ENCODE measurements at regions of chr1 and their contacts with region 1.

Region 1: GRCh38 chr1:113835642-113836307 is 23.5 kb upstream of the RSBN1 start:
- DNase-seq: peak in 4 of 5 donors; percentile 52 to 64 (median 59)
- H3K4me3 ChIP-seq: no peak overlapping the region
- H3K4me3 Mint-ChIP-seq: peak overlapping the region in 2 of 8 donors; percentile 19 to 36
- H3K27ac ChIP-seq: no peak overlapping the region
- H3K27ac Mint-ChIP-seq: peak overlapping the region in 3 of 7 donors; percentile 9 to 80 (median 65)
- H3K4me1 ChIP-seq: peaks cover 6% of the 10 kb centered on the region
- H3K4me1 Mint-ChIP-seq: peaks cover 2 to 5% (median 5%) of the 10 kb centered on the region in 4 donors
- H3K27me3 ChIP-seq: no peaks in the 10 kb centered on the region
- H3K27me3 Mint-ChIP-seq: no peaks in the 10 kb centered on the region

Region 2: GRCh38 chr1:113871597-113872113 is 35.9 kb after region 1 on chr1 and contains the start of gene PTPN22:
- CTCF ChIA-PET with region 1: interaction called, 5 read pairs
- POLR2A ChIA-PET with region 1: interaction called, 3 read pairs
- intact Hi-C with region 1: loop called (anchors 1 kb)
- DNase-seq: peak; percentile 85 to 95 (median 90)
- H3K4me3 ChIP-seq: peak within 1 kb of the TSS; percentile 48 to 71
- H3K4me3 Mint-ChIP-seq: peak within 1 kb of the TSS; percentile 85 to 95 (median 90)
- H3K27ac ChIP-seq: peak within 1 kb of the TSS; percentile 79
- H3K27ac Mint-ChIP-seq: peak within 1 kb of the TSS; percentile 96 to 99 (median 98)
- H3K4me1 ChIP-seq: peaks cover 74% of the 10 kb centered on the region
- H3K4me1 Mint-ChIP-seq: peaks cover 56 to 83% (median 66%) of the 10 kb centered on the region in 4 donors
- H3K27me3 ChIP-seq: no peaks in the 10 kb centered on the region
- H3K27me3 Mint-ChIP-seq: no peaks in the 10 kb centered on the region
- total RNA-seq, gene PTPN22: 32.2 to 33.7 TPM

Region 3: DNA sequence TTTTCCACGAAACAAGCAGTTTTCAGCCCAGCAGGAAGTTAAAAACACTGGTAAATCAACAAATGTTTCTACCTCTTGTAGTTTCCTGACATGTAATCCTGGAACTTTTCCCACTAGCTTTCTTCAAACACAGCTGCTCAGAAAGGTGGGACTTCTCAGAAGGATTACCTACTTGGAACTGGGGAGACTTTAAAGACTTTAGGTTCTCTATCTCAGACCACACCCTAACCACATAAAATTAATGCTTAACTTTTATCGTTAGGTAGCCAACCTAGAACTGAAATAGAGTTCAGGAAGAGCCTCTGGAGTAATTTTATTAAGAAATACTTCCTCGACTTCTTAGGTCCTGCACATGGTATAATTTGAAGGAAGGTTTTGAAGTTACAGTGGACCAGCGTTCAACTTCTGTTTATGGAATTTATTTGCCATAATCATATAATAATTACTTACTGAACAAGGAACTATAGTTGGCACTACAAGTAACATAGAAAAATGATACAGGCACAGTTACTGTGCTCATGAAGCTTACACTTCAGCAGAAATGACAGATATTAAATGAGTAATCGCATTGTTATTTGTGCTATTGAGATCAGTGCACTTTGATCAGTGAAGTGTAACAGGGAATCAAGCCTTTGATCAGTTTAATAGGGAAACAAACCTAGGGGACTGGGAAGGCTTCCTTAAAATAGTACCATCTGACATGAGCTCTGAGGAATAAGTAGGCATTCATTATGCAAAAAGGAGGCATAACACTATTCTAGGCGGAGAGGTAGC is 51.8 kb after region 1 on chr1 and contains the start of gene BCL2L15:
- CTCF ChIA-PET with region 1: interaction called, 10 read pairs
- POLR2A ChIA-PET with region 1: no interaction called
- intact Hi-C with region 1: no loop called
- DNase-seq: no peak
- H3K4me3 ChIP-seq: no peak within 1 kb of the TSS
- H3K4me3 Mint-ChIP-seq: peak within 1 kb of the TSS; percentile 2 to 65 (median 38)
- H3K27ac ChIP-seq: no peak within 1 kb of the TSS
- H3K27ac Mint-ChIP-seq: peak within 1 kb of the TSS in 5 of 7 donors; percentile 10 to 69 (median 43)
- H3K4me1 ChIP-seq: peaks cover 22% of the 10 kb centered on the region
- H3K4me1 Mint-ChIP-seq: peaks cover 19 to 39% (median 24%) of the 10 kb centered on the region in 4 donors
- H3K27me3 ChIP-seq: no peaks in the 10 kb centered on the region
- H3K27me3 Mint-ChIP-seq: no peaks in the 10 kb centered on the region
- total RNA-seq, gene BCL2L15: 1.3 to 2.1 TPM

Region 4: GRCh38 chr1:113949007-113949406 is 113.2 kb after region 1 on chr1:
- CTCF ChIA-PET with region 1: interaction called, 21 read pairs
- POLR2A ChIA-PET with region 1: interaction called, 3 read pairs
- intact Hi-C with region 1: no loop called
- DNase-seq: peak in 2 of 5 donors; percentile 27 to 41
- H3K4me3 ChIP-seq: no peak overlapping the region
- H3K4me3 Mint-ChIP-seq: peak overlapping the region in 4 of 8 donors; percentile 51 to 86 (median 72)
- H3K27ac ChIP-seq: peak overlapping the region; percentile 5
- H3K27ac Mint-ChIP-seq: peak overlapping the region; percentile 69 to 95 (median 91)
- H3K4me1 ChIP-seq: peaks cover 88% of the 10 kb centered on the region
- H3K4me1 Mint-ChIP-seq: peaks cover 47 to 93% (median 65%) of the 10 kb centered on the region in 4 donors
- H3K27me3 ChIP-seq: no peaks in the 10 kb centered on the region
- H3K27me3 Mint-ChIP-seq: no peaks in the 10 kb centered on the region

Region 5: GRCh38 chr1:113963281-113963906 is 127.6 kb after region 1 on chr1:
- CTCF ChIA-PET with region 1: interaction called, 26 read pairs
- POLR2A ChIA-PET with region 1: interaction called, 4 read pairs
- intact Hi-C with region 1: loop called (anchors 1 kb)
- DNase-seq: peak in 1 of 5 donors; percentile 13
- H3K4me3 ChIP-seq: no peak overlapping the region
- H3K4me3 Mint-ChIP-seq: no peak overlapping the region
- H3K27ac ChIP-seq: no peak overlapping the region
- H3K27ac Mint-ChIP-seq: peak overlapping the region in 5 of 7 donors; percentile 57 to 91 (median 71)
- H3K4me1 ChIP-seq: no peaks in the 10 kb centered on the region
- H3K4me1 Mint-ChIP-seq: peaks cover 7 to 17% (median 13%) of the 10 kb centered on the region in 4 donors
- H3K27me3 ChIP-seq: no peaks in the 10 kb centered on the region
- H3K27me3 Mint-ChIP-seq: no peaks in the 10 kb centered on the region

Region 6: DNA sequence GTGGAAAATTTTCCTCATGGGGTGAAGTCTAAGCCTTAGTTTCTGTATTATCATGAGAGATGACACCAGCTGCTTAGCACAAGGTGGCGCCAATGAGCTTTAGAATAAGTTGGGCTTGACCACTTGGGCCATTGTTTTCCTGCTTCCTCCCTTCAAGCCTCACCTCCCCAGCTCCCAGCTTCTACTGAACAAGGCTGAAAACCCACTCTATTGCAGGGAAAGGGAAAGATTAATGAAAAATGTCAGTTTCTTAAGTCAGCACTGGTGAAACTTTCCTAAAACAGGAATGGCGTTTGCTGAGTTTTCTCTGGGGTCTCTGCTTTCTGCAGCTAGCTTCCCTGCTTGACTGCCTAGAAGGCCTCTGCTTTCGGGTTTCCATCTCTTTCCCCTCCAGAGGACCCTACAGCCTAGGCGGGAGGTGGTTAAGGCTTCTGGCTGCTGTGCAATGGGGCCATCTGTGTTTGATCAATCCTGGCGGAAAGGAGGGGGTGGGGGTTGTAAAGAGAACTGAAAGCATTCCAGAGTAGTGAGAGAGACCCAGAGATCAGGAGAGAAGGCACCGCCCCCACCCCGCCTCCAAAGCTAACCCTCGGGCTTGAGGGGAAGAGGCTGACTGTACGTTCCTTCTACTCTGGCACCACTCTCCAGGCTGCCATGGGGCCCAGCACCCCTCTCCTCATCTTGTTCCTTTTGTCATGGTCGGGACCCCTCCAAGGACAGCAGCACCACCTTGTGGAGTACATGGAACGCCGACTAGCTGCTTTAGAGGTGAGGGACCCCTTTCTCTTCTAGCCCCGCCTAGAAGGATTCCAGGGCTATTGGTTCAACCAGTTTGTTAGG is 143.3 kb after region 1 on chr1 and contains the start of gene OLFML3:
- CTCF ChIA-PET with region 1: interaction called, 3 read pairs
- POLR2A ChIA-PET with region 1: no interaction called
- intact Hi-C with region 1: loop called (anchors 1 kb)
- DNase-seq: peak in 3 of 5 donors; percentile 17 to 27 (median 22)
- H3K4me3 ChIP-seq: no peak within 1 kb of the TSS
- H3K4me3 Mint-ChIP-seq: peak within 1 kb of the TSS in 1 of 8 donors; percentile 17
- H3K27ac ChIP-seq: no peak within 1 kb of the TSS
- H3K27ac Mint-ChIP-seq: peak within 1 kb of the TSS in 5 of 7 donors; percentile 30 to 67 (median 50)
- H3K4me1 ChIP-seq: no peaks in the 10 kb centered on the region
- H3K4me1 Mint-ChIP-seq: peaks cover 11 to 41% (median 27%) of the 10 kb centered on the region in 4 donors
- H3K27me3 ChIP-seq: no peaks in the 10 kb centered on the region
- H3K27me3 Mint-ChIP-seq: no peaks in the 10 kb centered on the region
- total RNA-seq, gene OLFML3: 0.42 to 0.70 TPM

Region 7: DNA sequence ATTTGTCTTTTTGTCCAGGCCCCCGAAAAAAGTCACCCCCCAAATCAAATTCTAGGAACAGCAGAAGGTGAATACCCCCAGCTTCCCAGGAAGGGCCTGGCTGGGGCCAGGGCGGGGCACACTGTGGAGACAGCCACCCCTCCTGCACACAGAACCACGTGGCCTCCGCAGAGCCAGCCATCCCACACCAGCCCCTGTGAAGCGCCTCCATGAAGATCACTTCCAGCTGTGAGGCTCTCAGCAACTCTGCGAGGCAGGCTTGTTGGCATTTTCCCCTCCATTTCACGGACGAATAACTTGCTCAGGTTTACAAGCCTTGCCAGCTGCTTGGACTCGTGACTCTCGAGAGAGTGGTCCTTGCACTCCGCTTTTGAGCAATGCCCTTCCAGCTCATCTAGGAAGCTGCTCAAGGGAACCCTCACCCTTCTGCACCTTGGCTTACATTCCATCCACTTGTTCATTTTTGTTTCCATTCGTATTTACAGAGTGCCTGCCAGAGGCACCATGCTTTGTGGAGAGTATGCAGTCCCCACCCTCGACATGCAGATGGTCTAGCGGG is 269.7 kb after region 1 on chr1:
- CTCF ChIA-PET with region 1: no interaction called
- POLR2A ChIA-PET with region 1: no interaction called
- intact Hi-C with region 1: no loop called
- DNase-seq: no peak
- H3K4me3 ChIP-seq: no peak overlapping the region
- H3K4me3 Mint-ChIP-seq: no peak overlapping the region
- H3K27ac ChIP-seq: no peak overlapping the region
- H3K27ac Mint-ChIP-seq: no peak overlapping the region
- H3K4me1 ChIP-seq: no peaks in the 10 kb centered on the region
- H3K4me1 Mint-ChIP-seq: no peaks in the 10 kb centered on the region
- H3K27me3 ChIP-seq: no peaks in the 10 kb centered on the region
- H3K27me3 Mint-ChIP-seq: peaks cover 3 to 6% of the 10 kb centered on the region in 2 donors

Region 8: DNA sequence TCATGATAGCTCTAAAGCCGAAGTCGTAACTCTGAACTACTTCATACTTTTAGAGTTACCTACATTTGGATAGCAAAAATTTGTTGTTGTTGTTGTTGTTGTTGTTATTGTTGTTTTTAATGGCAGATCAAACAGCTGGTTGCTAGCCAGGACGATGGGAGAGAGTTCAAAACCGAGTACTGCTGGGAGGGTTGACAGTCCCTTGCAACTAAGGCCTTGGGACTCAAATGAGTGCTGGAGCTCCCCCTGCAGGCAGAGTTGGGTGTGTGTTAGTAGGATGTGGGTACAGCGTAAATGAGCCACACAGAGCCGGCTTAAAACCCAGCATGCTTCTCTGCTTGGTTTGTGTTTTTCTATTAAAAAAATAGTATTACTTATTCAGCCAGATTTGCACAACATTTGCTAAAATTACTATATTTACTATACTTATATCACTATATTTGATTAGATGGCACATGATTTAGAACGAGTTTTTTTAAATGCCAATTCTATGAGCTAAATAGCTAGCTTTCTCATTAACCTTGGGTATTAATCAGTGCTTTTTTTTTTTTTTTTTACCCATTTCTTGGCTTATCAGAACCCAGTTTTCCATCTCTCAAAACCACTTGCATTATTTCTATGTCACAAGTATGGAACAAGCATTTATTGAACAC is 447.1 kb after region 1 on chr1:
- CTCF ChIA-PET with region 1: interaction called, 26 read pairs
- POLR2A ChIA-PET with region 1: no interaction called
- intact Hi-C with region 1: no loop called
- DNase-seq: peak; percentile 76 to 81 (median 78)
- H3K4me3 ChIP-seq: no peak overlapping the region
- H3K4me3 Mint-ChIP-seq: no peak overlapping the region
- H3K27ac ChIP-seq: no peak overlapping the region
- H3K27ac Mint-ChIP-seq: no peak overlapping the region
- H3K4me1 ChIP-seq: no peaks in the 10 kb centered on the region
- H3K4me1 Mint-ChIP-seq: peaks cover 0 to 5% (median under 1%) of the 10 kb centered on the region in 4 donors
- H3K27me3 ChIP-seq: no peaks in the 10 kb centered on the region
- H3K27me3 Mint-ChIP-seq: peaks cover 0 to 1% of the 10 kb centered on the region in 2 donors

Measured in CD4-positive, alpha-beta memory T cell (primary cell).